ENCODE measurements at regions of chr1 and their contacts with region 1.

Region 1: DNA sequence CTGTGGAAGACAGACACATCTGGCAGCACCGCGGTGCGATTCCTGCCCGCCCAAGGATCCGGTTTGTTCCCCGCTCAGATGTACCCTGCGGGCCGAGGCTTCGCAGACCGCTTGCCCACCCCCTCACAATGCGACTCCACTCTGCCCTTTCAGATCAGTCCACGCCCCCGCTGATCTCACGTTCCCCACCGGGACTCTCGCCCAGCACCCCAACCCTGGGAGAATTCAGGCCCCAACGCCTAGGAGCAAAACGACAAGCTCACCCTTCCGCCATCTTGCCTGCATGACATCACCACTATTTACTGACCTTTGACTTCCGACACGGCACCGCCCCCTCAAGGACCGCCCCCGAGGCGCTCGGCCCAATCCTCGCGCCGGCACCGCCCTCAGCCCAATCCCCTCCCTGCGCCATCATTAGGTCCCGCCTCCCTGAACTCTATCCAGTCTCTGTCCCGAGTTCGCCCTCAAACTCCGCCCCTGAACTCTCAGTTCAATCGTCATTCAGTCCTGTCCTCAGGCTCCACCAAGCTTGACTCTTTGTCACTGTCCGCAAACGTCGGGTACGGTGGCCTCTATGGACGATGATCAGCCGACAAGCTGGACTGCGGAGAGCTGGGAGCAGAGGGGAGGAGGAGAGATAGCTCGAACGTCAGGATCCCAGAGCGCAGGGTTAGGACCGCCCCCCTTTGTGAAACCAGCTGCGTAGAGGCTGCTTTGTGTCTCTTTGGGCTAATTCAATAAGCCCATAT is at the start of gene BSDC1:
- DNase-seq: peak; percentile 100
- H3K4me3 Mint-ChIP-seq: peak within 1 kb of the TSS; percentile 100
- H3K27ac Mint-ChIP-seq: peak within 1 kb of the TSS; percentile 99
- H3K4me1 Mint-ChIP-seq: peaks cover 31% of the 10 kb centered on the region
- H3K27me3 Mint-ChIP-seq: no peaks in the 10 kb centered on the region
- total RNA-seq, gene BSDC1: 35.2 to 38.3 TPM

Region 2: GRCh38 chr1:32351399-32352238 is 42.7 kb before region 1 on chr1:
- CTCF ChIA-PET with region 1: no interaction called
- intact Hi-C with region 1: loop called (anchors 2 kb)
- DNase-seq: peak; percentile 95
- H3K4me3 Mint-ChIP-seq: peak overlapping the region; percentile 83
- H3K27ac Mint-ChIP-seq: peak overlapping the region; percentile 76
- H3K4me1 Mint-ChIP-seq: peaks cover 31% of the 10 kb centered on the region
- H3K27me3 Mint-ChIP-seq: no peaks in the 10 kb centered on the region

Region 3: GRCh38 chr1:32716312-32717148 is 322.2 kb after region 1 on chr1:
- CTCF ChIA-PET with region 1: no interaction called
- intact Hi-C with region 1: no loop called
- DNase-seq: peak; percentile 92
- H3K4me3 Mint-ChIP-seq: no peak overlapping the region
- H3K27ac Mint-ChIP-seq: no peak overlapping the region
- H3K4me1 Mint-ChIP-seq: peaks cover 9% of the 10 kb centered on the region
- H3K27me3 Mint-ChIP-seq: peaks cover 2% of the 10 kb centered on the region

Measured in activated naive CD4-positive, alpha-beta T cell treated with anti-CD3 and anti-CD28 coated beads for 36 hours (primary cell).